CD4-positive, alpha-beta T cell (primary cell): ENCODE measurements at regions of chr19 and their contacts with region 1.

Region 1: GRCh38 chr19:55385740-55386529 is at the start of gene RPL28:
- DNase-seq: peak; percentile 96 to 99 (median 98)
- ATAC-seq: peak; percentile 78
- H3K4me3 ChIP-seq: peak within 1 kb of the TSS; percentile 99
- H3K4me3 Mint-ChIP-seq: peak within 1 kb of the TSS; percentile 100
- H3K27ac ChIP-seq: peak within 1 kb of the TSS; percentile 72 to 96
- H3K27ac Mint-ChIP-seq: peak within 1 kb of the TSS; percentile 97
- H3K4me1 ChIP-seq: peaks cover 73% of the 10 kb centered on the region
- H3K4me1 Mint-ChIP-seq: peaks cover 82% of the 10 kb centered on the region
- H3K27me3 ChIP-seq: no peaks in the 10 kb centered on the region
- H3K27me3 Mint-ChIP-seq: no peaks in the 10 kb centered on the region
- CTCF ChIP-seq: no peak
- total RNA-seq, gene RPL28: 3,995 to 4,178 TPM

Region 2: DNA sequence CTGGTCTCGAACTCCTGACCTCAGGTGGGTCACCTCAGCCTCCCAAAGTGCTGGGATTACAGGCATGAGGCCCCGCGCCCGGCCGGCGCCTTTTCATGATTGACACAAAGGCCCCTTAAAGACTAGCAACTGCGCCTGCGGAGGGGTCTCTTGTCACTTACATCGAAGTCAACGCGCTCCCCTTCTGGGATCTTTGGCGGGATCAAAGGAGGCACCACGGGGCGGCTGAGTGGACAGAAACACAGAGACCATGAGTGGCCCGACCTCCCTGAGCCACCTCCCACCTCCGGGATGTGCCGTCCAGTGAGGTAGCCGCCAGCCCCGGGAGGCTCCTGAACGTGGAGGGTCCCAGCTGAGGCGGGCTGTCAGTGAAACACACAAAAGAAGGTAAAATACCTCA is 244.2 kb before region 1 on chr19:
- CTCF ChIA-PET with region 1: interaction called, 5 read pairs
- POLR2A ChIA-PET with region 1: no interaction called
- intact Hi-C with region 1: loop called in 1 of 2 experiments (anchors 1 kb)
- DNase-seq: no peak
- ATAC-seq: no peak
- H3K4me3 ChIP-seq: no peak overlapping the region
- H3K4me3 Mint-ChIP-seq: no peak overlapping the region
- H3K27ac ChIP-seq: no peak overlapping the region
- H3K27ac Mint-ChIP-seq: no peak overlapping the region
- H3K4me1 ChIP-seq: peaks cover 20% of the 10 kb centered on the region
- H3K4me1 Mint-ChIP-seq: peaks cover 5% of the 10 kb centered on the region
- H3K27me3 ChIP-seq: peaks cover 50 to 58% of the 10 kb centered on the region in 2 experiments
- H3K27me3 Mint-ChIP-seq: peaks cover 59% of the 10 kb centered on the region
- CTCF ChIP-seq: no peak

Region 3: DNA sequence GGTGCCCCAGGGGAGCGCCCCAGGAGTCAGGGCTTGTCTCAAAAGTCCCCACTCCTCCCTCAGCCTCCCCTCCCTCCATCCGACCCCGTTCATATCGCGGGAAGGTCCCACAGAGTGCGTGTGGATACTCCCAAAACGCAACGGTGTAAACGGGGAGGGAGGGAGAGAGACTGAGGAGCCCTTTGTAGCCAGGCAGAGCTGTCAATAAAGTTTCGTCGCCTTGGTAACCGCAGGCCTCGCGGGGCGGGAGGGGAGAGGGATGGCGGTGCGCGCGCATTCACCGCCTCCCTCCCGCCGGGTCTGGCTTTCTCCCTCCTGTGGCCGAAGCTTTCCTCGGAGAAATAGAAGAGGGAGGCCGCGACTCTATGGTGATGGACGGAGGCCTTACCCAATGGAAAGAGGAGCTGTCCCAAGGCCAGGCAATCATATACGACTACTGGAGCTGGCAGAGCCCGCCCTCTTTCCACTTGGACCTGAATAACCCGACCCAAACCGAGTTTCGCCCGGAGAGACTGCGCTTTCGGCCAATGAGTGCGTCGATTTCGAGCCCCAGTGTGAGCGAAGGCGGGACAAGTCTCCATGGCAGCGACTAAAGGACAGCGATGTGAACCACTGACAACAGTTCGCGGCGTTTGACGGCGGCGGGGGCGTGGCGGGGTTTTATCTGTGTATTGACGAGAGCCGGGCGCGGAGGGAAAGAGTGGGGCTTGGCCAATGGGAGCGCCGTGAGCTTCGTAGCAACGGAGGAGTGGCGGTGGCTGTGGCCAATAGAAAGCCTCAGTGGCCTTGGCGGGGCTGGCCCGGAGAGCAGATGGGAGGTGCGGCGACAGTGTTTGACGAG is 46.7 kb before region 1 on chr19 and contains the start of gene KMT5C:
- CTCF ChIA-PET with region 1: interaction called, 10 read pairs
- POLR2A ChIA-PET with region 1: interaction called, 29 read pairs
- intact Hi-C with region 1: loop called (anchors 1 kb)
- DNase-seq: peak; percentile 100
- ATAC-seq: peak; percentile 73
- H3K4me3 ChIP-seq: peak within 1 kb of the TSS; percentile 71
- H3K4me3 Mint-ChIP-seq: peak within 1 kb of the TSS; percentile 98
- H3K27ac ChIP-seq: peak within 1 kb of the TSS; percentile 91 to 98
- H3K27ac Mint-ChIP-seq: peak within 1 kb of the TSS; percentile 99
- H3K4me1 ChIP-seq: peaks cover 32% of the 10 kb centered on the region
- H3K4me1 Mint-ChIP-seq: peaks cover 21% of the 10 kb centered on the region
- H3K27me3 ChIP-seq: peaks cover 3 to 4% of the 10 kb centered on the region in 2 experiments
- H3K27me3 Mint-ChIP-seq: peaks cover 22% of the 10 kb centered on the region
- CTCF ChIP-seq: peak; percentile 30
- total RNA-seq, gene KMT5C: 113 to 115 TPM

Region 4: DNA sequence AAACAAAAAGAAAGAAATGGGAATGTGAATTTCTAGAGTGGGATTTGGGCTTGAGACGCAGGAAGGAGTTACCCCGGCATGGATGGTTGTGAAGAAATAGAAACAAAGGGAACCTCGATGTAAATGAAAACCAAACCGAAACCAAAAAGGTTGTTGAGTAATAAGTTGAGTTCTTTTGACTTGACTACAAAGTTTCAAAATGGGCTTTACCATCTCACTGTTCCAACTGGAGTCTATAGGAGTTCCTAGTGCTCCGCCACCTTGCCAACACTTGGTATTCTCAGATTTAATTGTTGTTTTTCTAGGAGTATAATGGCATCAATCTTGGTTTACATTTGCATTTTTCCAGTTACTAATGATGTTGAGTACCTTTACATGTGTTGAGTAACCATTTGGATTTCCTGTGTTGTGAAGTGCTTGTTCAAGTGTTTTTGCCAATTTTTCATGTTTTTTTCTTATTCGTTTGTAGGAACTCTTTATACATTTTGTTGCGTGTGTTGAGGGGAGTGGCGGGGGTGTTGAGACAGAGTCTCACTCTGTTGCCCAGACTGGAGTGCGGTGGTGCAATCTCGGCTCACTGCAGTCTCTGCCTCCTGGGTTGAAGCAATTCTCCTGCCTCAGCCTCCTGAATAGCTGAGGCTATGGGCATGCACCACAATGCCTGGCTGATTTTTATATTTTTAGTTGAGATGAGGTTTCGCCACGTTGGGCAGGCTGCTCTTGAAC is 12.4 kb after region 1 on chr19:
- CTCF ChIA-PET with region 1: no interaction called
- POLR2A ChIA-PET with region 1: interaction called, 10 read pairs
- intact Hi-C with region 1: no loop called
- DNase-seq: no peak
- ATAC-seq: no peak
- H3K4me3 ChIP-seq: no peak overlapping the region
- H3K4me3 Mint-ChIP-seq: peak overlapping the region; percentile 4
- H3K27ac ChIP-seq: no peak overlapping the region
- H3K27ac Mint-ChIP-seq: peak overlapping the region; percentile 33
- H3K4me1 ChIP-seq: peaks cover 5% of the 10 kb centered on the region
- H3K4me1 Mint-ChIP-seq: peaks cover 8% of the 10 kb centered on the region
- H3K27me3 ChIP-seq: no peaks in the 10 kb centered on the region
- H3K27me3 Mint-ChIP-seq: no peaks in the 10 kb centered on the region
- CTCF ChIP-seq: no peak

Region 5: GRCh38 chr19:55461259-55461973 is 75.5 kb after region 1 on chr19 and contains the start of gene ISOC2:
- CTCF ChIA-PET with region 1: no interaction called
- POLR2A ChIA-PET with region 1: no interaction called
- intact Hi-C with region 1: loop called in 1 of 2 experiments (anchors 2 kb)
- DNase-seq: peak; percentile 100
- ATAC-seq: peak; percentile 98
- H3K4me3 ChIP-seq: peak within 1 kb of the TSS; percentile 83
- H3K4me3 Mint-ChIP-seq: peak within 1 kb of the TSS; percentile 96
- H3K27ac ChIP-seq: peak within 1 kb of the TSS; percentile 47 to 72
- H3K27ac Mint-ChIP-seq: peak within 1 kb of the TSS; percentile 68
- H3K4me1 ChIP-seq: peaks cover 19% of the 10 kb centered on the region
- H3K4me1 Mint-ChIP-seq: peaks cover 17% of the 10 kb centered on the region
- H3K27me3 ChIP-seq: no peaks in the 10 kb centered on the region
- H3K27me3 Mint-ChIP-seq: no peaks in the 10 kb centered on the region
- CTCF ChIP-seq: no peak
- total RNA-seq, gene ISOC2: 1.5 to 2.2 TPM